Posterior vena cava (tissue), 2 donors: ENCODE measurements at regions of chr6 and their contacts with region 1.

Region 1: DNA sequence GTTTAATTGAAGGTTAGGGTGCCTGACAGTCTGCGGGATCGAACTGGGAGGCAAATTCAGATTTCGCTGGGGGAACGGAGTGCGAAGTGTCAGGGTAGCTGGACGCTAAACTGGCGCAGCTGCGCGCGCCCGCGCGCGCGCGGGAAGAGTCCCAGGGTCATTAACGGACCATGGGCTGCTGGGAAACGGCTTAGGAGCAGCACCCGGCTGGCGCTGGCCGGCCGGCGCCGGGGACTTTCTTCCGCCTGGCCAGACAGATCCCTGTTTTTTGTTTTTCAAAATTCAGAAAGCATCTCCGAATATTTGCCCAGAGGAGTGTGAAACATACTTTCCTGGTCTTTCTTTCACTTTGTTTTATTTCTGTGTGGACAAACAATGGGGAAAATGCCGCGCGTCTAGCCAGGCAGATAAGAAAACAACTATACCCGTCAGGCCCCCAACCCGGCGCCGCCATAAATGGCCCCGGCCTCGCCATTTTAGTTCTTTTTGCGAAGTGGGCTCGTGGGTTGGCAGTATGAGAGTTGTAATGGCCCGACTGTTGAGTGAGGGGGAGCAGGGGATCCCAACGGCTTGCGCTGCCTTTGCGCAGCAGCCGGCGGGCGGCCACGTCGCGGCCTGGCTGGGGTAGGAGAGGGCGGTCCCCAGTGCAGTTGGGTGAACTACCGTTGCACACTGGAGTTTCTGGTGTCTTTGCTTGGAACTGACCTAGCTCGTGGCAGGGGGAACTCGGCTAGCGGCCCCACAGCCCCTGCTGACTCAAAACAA is 7.1 kb downstream of the HSPA1B start:
- DNase-seq: peak; percentile 95

Region 2: DNA sequence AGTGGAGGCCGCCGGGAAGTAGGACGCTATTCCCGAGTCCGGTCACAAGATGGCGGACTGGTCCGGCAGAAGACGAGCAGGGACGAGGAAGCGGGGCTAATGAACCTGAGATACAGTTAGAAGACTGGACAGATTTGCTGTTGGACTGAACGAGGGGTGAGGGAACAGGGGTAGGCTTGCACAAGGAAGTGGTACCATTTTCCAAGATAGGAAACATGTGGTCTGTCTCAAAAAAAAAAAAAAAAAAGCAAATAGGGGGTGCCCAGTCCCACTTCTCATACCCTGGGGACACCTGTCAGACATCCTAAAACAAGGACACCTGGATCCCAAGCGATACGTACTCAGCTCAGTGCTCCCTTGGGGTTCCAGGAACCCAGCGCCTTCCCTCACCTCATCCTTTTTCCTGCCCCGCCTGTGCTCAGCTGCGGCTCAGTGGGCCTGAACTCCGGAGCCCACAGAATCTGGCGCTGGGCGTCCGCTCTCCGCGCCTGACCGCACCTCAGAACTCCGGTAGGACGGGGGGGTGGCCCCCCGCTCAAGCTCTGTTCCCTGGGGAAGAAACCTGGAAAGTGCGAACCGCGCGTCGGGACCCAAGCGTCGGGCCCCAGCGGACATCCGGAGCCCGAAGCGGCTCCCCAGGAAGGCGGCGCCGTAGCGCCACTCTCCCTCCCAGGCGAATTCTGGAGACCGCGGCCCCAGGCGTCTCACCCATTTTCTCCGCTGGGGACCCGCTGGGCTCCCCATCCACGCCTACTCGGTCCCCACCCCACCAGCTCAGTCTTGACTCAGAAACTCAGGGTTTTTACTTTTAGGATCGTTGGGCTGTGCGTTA is 153.6 kb before region 1 on chr6 and contains the start of gene LY6G5C:
- intact Hi-C with region 1: loop called (anchors 5 to 10 kb)
- DNase-seq: peak; percentile 95
- total RNA-seq, gene LY6G5C: 1.7 to 1.9 TPM

Region 3: DNA sequence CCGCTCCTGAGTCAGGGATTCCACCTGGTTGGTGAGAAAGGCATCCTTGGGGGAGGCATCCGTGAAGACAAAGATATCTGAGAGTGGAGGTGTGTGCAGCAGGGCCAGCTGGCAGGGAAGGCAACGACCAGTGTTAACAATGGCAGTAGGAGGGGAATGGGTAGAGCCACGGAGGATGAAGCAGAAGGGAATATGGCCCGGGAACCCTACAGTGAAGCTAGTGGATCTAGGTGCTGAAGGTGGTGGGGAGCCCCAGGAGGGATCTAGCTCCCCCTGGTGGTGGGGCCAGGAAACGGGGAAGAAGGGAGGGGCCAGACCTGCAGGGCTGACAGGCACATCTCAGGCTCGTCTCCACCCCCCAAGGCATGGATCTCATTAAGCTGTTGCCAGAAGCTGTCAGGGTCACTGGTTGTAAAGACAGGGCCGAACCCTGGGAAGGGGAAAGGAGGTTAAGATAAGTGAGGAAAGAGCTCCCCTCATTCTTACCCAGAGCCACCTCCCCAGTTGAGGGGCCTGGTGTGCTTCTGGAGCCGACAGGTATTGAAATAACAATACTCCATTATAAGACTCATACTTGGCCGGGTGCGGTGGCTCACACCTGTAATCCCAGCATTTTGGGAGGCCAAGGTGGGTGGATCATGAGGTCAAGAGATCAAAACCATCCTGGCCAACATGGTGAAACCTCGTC is 64.8 kb before region 1 on chr6:
- intact Hi-C with region 1: loop called in 1 of 2 experiments (anchors 5 kb)
- DNase-seq: peak; percentile 91